Aorta (tissue), 5 donors: ENCODE measurements at regions of chr11 and their contacts with region 1.

Region 1: DNA sequence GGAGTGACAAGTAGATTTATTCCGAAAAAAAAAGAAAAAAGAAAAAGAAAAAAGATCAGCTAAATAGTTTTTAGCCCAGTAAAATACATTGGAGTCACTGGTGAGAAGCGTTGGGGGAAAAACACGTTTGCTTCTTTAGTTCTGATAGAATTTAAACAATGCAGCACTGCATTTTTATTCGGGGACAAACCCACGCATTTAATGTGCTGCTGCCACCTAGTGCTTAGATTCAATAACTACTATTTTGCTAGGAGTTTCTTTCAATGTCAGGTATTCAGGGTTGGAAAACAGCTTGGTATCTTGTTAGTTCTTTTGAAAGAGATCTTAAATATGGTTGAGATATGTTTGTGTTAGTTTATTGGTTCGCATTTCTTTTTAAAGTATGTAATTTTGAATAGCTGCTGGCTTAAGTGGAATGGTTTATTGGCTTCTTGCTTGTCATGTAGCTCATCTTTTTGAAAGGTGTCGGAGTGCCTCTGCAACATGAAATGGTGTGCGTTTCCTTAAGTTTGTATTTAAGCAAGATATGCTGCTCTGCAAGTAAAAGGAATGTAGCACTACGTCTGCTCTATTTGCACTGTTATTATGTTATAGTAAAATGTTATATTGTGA is 41.9 kb downstream of the SVIP start:
- DNase-seq: no peak
- ATAC-seq: no peak
- H3K4me3 ChIP-seq: no peak overlapping the region
- H3K27ac ChIP-seq: no peak overlapping the region
- H3K4me1 ChIP-seq: no peaks in the 10 kb centered on the region
- H3K27me3 ChIP-seq: no peaks in the 10 kb centered on the region

Region 2: DNA sequence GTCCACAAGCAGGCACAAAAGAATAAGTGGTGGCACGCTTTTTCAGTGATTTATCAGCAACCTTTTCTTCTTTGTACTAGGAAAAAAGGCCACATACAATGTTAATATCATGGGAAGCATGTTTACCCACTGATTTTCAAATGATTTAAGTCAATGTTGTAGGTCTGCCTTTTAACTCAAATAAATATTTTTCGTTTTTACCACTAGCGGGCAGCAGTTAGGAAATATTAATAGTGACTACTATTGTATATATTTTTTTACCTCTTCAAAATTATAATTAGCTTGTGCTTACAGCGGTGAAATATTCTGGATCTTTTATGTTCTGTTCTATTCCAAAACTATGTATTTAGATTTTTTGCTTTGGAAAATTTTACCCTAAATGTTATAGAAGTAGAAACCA is 455.9 kb before region 1 on chr11:
- intact Hi-C with region 1: loop called (anchors 5 to 10 kb)
- DNase-seq: no peak
- ATAC-seq: no peak
- H3K4me3 ChIP-seq: no peak overlapping the region
- H3K27ac ChIP-seq: no peak overlapping the region
- H3K4me1 ChIP-seq: no peaks in the 10 kb centered on the region
- H3K27me3 ChIP-seq: no peaks in the 10 kb centered on the region

Region 3: GRCh38 chr11:22337596-22338485 is 449.8 kb before region 1 on chr11 and contains the start of gene SLC17A6:
- intact Hi-C with region 1: loop called (anchors 5 to 10 kb)
- DNase-seq: no peak
- ATAC-seq: no peak
- H3K4me3 ChIP-seq: no peak within 1 kb of the TSS
- H3K27ac ChIP-seq: no peak within 1 kb of the TSS
- H3K4me1 ChIP-seq: no peaks in the 10 kb centered on the region
- H3K27me3 ChIP-seq: no peaks in the 10 kb centered on the region
- total RNA-seq, gene SLC17A6: not detected